Naive thymus-derived CD8-positive, alpha-beta T cell (primary cell): ENCODE measurements at regions of chr5 and their contacts with region 1.

Region 1: GRCh38 chr5:65624571-65625555 is at the starts of genes SHLD3 and TRAPPC13:
- DNase-seq: peak; percentile 64 to 96 (median 88)
- ATAC-seq: peak; percentile 71 to 73
- H3K4me3 Mint-ChIP-seq: peak within 1 kb of the TSS; percentile 93 to 100 (median 99)
- H3K27ac Mint-ChIP-seq: peak within 1 kb of the TSS; percentile 95 to 100 (median 99)
- H3K4me1 Mint-ChIP-seq: peaks cover 9 to 61% (median 47%) of the 10 kb centered on the region in 4 donors
- H3K27me3 Mint-ChIP-seq: no peaks in the 10 kb centered on the region
- polyA plus RNA-seq, gene SHLD3: 2.6 to 7.2 (median 2.9) TPM
- polyA plus RNA-seq, gene TRAPPC13: 17.3 to 19.7 (median 18.1) TPM

Region 2: DNA sequence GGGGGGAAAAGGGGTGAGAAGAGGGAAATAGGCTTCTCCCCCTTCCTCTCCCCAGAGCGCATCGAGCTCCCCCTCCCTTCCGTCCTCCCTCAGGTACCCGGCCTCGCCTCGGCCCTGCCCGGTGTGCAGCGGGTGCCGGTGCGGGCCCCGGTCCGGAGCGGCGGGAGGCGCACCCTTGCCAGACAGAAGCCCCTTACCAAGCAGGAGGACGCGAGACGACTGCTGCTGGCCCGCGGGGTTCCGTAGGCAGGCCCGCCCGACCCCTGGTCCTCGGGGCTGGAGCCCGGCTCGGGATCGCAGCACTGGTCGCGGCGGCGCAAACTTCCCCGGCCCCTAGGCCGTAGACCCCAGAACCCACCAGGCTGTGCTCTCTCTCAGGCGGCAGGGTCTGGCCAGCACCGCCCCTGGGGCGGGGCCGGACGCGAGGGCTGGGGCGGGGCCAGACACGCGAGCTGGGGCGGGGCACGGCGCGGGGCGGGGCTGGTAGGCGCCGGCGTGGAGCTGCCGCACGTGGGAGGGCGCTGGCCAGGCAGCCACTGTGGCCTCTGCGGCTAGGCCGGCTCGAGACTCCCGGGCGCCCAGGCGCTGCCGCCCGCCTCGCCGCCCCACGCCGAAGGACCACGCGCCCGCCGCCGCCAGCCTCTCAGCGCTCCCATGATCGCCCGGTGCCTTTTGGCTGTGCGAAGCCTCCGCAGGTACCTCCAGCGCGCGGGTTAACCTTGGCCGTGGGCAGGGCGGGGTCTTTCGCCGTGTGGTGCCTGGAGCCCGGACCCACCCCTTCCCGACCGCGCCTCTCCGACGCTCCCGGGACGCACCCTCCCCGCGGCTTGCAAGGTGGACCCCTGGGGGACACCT is 97.1 kb after region 1 on chr5 and contains the starts of genes NLN and SGTB:
- POLR2A ChIA-PET with region 1: interaction called, 25 read pairs
- DNase-seq: peak; percentile 67 to 92 (median 84)
- ATAC-seq: peak; percentile 82 to 89
- H3K4me3 Mint-ChIP-seq: peak within 1 kb of the TSS in 9 of 10 donors; percentile 88 to 97 (median 93)
- H3K27ac Mint-ChIP-seq: peak within 1 kb of the TSS; percentile 74 to 96 (median 88)
- H3K4me1 Mint-ChIP-seq: peaks cover 10 to 29% (median 14%) of the 10 kb centered on the region in 4 donors
- H3K27me3 Mint-ChIP-seq: no peaks in the 10 kb centered on the region
- polyA plus RNA-seq, gene NLN: 2.3 to 4.9 (median 3.7) TPM
- polyA plus RNA-seq, gene SGTB: 12.5 to 15.4 (median 15.0) TPM